H1 (cell line): ENCODE measurements at regions of chr1 and their contacts with region 1.

Region 1: GRCh38 chr1:109263597-109264398 is 14.5 kb downstream of the CELSR2 start:
- DNase-seq: peak; percentile 87 to 98
- H3K4me3 ChIP-seq: no peak overlapping the region; a peak in 1 of 8 replicates
- H3K27ac ChIP-seq: no peak overlapping the region
- H3K4me1 ChIP-seq: peaks cover 0 to 11% (median 3%) of the 10 kb centered on the region in 4 experiments; a peak in 4 of 7 replicates
- H3K27me3 ChIP-seq: no peaks in the 10 kb centered on the region
- CTCF ChIP-seq: peak in 2 of 3 experiments; percentile 100; a peak in 3 of 4 replicates
- EP300 ChIP-seq: no peak
- POLR2A ChIP-seq: no peak
- RAD21 ChIP-seq: peak; percentile 90 to 93

Region 2: GRCh38 chr1:109201123-109201703 is 62.6 kb before region 1 on chr1:
- CTCF ChIA-PET with region 1: interaction called, 39 read pairs
- POLR2A ChIA-PET with region 1: interaction called, 3 read pairs
- DNase-seq: peak in 1 of 2 experiments; percentile 86
- H3K4me3 ChIP-seq: no peak overlapping the region
- H3K27ac ChIP-seq: no peak overlapping the region
- H3K4me1 ChIP-seq: peaks cover 0 to 4% (median 1%) of the 10 kb centered on the region in 4 experiments; a peak in 1 of 7 replicates
- H3K27me3 ChIP-seq: no peaks in the 10 kb centered on the region; a peak in 1 of 7 replicates
- CTCF ChIP-seq: peak; percentile 65 to 82 (median 75)
- EP300 ChIP-seq: no peak
- POLR2A ChIP-seq: no peak
- RAD21 ChIP-seq: peak; percentile 80 to 90

Region 3: DNA sequence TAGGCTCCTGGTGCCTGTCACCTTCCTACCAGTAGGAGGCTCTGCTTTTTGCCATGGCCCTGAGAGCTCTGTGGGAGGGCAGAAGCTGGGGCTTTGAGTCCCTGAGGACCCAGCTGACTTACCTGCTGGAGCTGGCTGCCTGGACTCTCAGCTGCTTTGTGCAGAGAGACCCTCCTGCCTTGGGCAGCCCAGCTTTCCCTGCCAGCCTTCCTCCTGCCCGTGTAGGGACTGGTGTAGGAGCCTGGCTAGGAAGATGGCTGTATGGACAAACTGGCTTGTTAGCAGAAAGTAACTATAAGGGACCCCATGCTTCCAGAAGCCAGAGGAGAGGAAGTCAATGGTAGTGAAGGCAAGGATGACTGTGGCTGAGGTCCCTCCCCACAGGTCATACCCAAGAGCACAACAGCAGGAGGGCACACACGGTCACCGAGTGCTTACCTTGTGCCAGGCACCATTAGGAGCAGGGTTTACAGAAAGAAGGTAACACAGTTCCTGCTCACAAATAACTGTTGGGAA is 24.2 kb before region 1 on chr1:
- CTCF ChIA-PET with region 1: interaction called, 95 read pairs
- POLR2A ChIA-PET with region 1: interaction called, 5 read pairs
- DNase-seq: peak; percentile 65 to 75
- H3K4me3 ChIP-seq: no peak overlapping the region
- H3K27ac ChIP-seq: peak overlapping the region; percentile 13; the same call in 1 of the 2 replicates
- H3K4me1 ChIP-seq: peaks cover 21 to 44% (median 31%) of the 10 kb centered on the region in 4 experiments
- H3K27me3 ChIP-seq: no peaks in the 10 kb centered on the region
- CTCF ChIP-seq: peak; percentile 78 to 91 (median 89)
- EP300 ChIP-seq: 0 out of 3 replicates have a peak, but pooled peaks of 1 of the 2 experiments have one; percentile 3
- POLR2A ChIP-seq: no peak
- RAD21 ChIP-seq: peak; percentile 29 to 60

Region 4: DNA sequence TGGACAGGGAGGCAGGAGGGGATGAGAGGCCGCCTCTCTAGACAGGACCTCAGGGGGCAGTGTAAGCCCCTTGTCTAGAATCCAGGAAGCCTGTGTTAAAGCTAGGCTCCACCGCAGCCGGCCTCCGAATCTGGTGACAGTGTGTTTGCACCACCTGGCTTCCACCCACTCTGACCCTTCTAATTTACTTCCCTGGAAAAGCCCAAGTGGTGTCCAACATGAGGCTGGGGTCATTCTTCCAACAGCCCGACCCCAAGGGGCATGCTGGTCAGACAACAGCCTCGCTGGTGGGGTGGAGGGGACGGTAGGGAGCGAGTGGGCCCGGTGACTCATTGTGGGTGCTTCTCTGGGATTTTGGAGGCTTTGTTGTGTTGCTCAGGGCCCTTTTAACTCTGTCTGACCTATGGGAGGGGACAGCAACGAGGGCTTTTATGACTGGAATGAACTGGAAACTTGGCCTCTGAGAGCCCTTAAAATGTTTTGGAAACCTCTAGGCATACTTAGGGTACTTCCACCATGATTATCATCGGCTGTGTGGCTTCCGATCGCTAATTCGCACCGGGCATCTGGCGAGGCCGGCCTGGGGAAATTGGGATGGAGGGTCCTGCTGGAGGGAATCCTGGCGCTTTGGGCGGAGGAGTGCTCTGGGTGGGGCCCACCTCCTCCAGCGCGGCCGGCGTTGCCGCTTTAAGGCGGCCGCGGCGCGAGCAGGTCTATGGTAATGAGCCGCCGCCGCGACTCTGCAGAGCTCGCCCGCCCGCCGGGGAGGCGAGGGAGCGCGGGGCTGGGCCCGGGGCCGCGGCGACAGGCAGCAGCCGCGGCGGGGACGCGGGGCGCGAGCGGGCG is 14.8 kb before region 1 on chr1 and contains the start of gene CELSR2:
- CTCF ChIA-PET with region 1: interaction called, 65 read pairs
- POLR2A ChIA-PET with region 1: interaction called, 7 read pairs
- DNase-seq: peak; percentile 66 to 90
- H3K4me3 ChIP-seq: peak within 1 kb of the TSS; percentile 28 to 62 (median 34); a peak in 7 of 8 replicates
- H3K27ac ChIP-seq: no peak within 1 kb of the TSS; the same call in 1 of the 2 replicates
- H3K4me1 ChIP-seq: peaks cover 0 to 23% (median 20%) of the 10 kb centered on the region in 4 experiments; a peak in 6 of 7 replicates
- H3K27me3 ChIP-seq: peaks cover 0 to 22% (median 16%) of the 10 kb centered on the region in 4 experiments; a peak in 5 of 7 replicates
- CTCF ChIP-seq: peak in 1 of 3 experiments; percentile 38; a peak in 2 of 4 replicates
- EP300 ChIP-seq: no peak
- POLR2A ChIP-seq: no peak
- RAD21 ChIP-seq: peak in 1 of 2 experiments; percentile 16; a peak in 1 of 4 replicates
- total RNA-seq, gene CELSR2: 27.7 and 28.0 TPM in 2 replicates

Region 5: GRCh38 chr1:109282952-109283747 is 19.4 kb after region 1 on chr1 and contains the start of gene PSRC1:
- CTCF ChIA-PET with region 1: interaction called, 46 read pairs
- POLR2A ChIA-PET with region 1: interaction called, 3 read pairs
- DNase-seq: peak; percentile 81 to 96
- H3K4me3 ChIP-seq: peak within 1 kb of the TSS; percentile 54 to 95 (median 86)
- H3K27ac ChIP-seq: peak within 1 kb of the TSS; percentile 87
- H3K4me1 ChIP-seq: peaks cover 8 to 11% (median 10%) of the 10 kb centered on the region in 4 experiments
- H3K27me3 ChIP-seq: no peaks in the 10 kb centered on the region
- CTCF ChIP-seq: no peak; a peak in 1 of 4 replicates
- EP300 ChIP-seq: no peak
- POLR2A ChIP-seq: peak; percentile 81 to 88; a peak in 2 of 3 replicates
- RAD21 ChIP-seq: no peak
- total RNA-seq, gene PSRC1: 67.3 and 69.6 TPM in 2 replicates

Region 6: DNA sequence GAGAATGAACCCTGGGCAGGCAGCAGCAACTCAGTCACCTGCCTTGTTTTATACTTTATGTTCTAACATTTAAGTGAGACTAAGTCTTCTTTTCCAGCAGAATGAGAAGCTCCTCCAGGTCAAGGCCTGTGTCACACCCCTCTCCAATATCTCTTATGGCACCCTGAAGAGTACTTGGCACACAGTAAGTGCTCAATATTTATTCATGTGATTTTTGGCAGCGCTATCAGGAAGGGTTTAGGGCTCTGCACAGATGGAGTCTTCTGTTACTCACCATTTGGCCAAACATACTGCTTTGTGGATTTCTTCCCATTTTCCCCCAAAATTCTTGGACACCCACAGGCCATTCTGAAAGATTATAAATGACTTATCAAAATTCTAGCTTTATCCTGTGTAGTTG is 86.9 kb after region 1 on chr1:
- CTCF ChIA-PET with region 1: no interaction called
- POLR2A ChIA-PET with region 1: no interaction called
- DNase-seq: no peak
- H3K4me3 ChIP-seq: no peak overlapping the region
- H3K27ac ChIP-seq: no peak overlapping the region
- H3K4me1 ChIP-seq: peaks cover 0 to 4% (median under 1%) of the 10 kb centered on the region in 4 experiments; a peak in 3 of 7 replicates
- H3K27me3 ChIP-seq: no peaks in the 10 kb centered on the region
- CTCF ChIP-seq: no peak
- EP300 ChIP-seq: no peak
- POLR2A ChIP-seq: no peak
- RAD21 ChIP-seq: no peak